RWPE1 (cell line): ENCODE measurements at regions of chr4 and their contacts with region 1.

Region 1: GRCh38 chr4:139243448-139244365 is 36.3 kb downstream of the MGARP start:
- DNase-seq: peak; percentile 87
- H3K27ac ChIP-seq: peak overlapping the region; percentile 96
- CTCF ChIP-seq: no peak

Region 2: GRCh38 chr4:139177868-139178611 is 65.7 kb before region 1 on chr4:
- CTCF ChIA-PET with region 1: no interaction called
- POLR2A ChIA-PET with region 1: no interaction called
- DNase-seq: peak; percentile 85
- H3K27ac ChIP-seq: peak overlapping the region; percentile 98
- CTCF ChIP-seq: no peak

Region 3: GRCh38 chr4:139282065-139282720 is 38.5 kb after region 1 on chr4:
- CTCF ChIA-PET with region 1: interaction called, 11 read pairs
- POLR2A ChIA-PET with region 1: no interaction called
- DNase-seq: no peak
- H3K27ac ChIP-seq: no peak overlapping the region
- CTCF ChIP-seq: no peak

Region 4: DNA sequence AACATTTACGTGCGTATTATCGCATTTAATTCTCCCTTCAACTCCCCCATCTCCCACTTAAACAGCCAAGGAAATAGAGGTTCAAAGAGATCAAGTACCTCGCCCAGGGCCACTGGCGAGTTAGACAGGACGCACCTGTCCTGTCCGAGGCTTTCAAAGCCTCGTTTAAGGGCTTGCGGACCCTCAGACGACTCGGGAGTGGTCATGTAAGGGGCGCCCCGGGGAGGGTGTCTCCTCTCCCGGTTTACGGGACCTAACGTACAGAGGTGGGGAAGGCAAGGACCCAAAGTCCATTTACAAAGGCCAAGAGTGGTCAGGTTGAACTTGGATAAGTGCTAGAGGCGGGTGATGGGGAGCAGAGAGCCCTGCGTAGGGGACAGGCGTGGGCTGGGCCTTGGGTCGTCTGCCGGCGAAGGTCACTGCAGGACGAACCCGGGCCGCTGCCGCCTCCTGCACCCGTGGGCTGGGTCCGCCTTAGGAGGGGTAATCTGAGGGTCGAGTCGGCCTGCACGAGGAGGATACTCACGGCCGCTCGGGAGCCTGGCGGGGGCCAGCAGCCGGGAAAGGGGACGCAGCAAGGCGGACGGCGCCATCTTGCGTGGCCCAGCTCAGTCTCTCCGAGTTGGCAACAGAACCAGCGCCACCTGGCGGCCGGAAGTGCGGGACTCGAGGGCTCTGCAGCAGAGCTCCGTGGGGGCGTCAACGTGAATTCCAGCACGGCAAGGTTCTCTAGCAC is 51.7 kb after region 1 on chr4:
- CTCF ChIA-PET with region 1: interaction called, 4 read pairs
- POLR2A ChIA-PET with region 1: interaction called, 12 read pairs
- DNase-seq: peak; percentile 79
- H3K27ac ChIP-seq: peak overlapping the region; percentile 86
- CTCF ChIP-seq: peak; percentile 92